Activated naive CD4-positive, alpha-beta T cell treated with anti-CD3 and anti-CD28 coated beads for 36 hours (primary cell): ENCODE measurements at regions of chr21 and their contacts with region 1.

Region 1: GRCh38 chr21:29232601-29233546 is 65.8 kb upstream of the BACH1 start:
- DNase-seq: no peak
- H3K4me3 Mint-ChIP-seq: peak overlapping the region; percentile 13
- H3K27ac Mint-ChIP-seq: peak overlapping the region; percentile 79
- H3K4me1 Mint-ChIP-seq: peaks cover 53% of the 10 kb centered on the region
- H3K27me3 Mint-ChIP-seq: peaks cover 4% of the 10 kb centered on the region

Region 2: DNA sequence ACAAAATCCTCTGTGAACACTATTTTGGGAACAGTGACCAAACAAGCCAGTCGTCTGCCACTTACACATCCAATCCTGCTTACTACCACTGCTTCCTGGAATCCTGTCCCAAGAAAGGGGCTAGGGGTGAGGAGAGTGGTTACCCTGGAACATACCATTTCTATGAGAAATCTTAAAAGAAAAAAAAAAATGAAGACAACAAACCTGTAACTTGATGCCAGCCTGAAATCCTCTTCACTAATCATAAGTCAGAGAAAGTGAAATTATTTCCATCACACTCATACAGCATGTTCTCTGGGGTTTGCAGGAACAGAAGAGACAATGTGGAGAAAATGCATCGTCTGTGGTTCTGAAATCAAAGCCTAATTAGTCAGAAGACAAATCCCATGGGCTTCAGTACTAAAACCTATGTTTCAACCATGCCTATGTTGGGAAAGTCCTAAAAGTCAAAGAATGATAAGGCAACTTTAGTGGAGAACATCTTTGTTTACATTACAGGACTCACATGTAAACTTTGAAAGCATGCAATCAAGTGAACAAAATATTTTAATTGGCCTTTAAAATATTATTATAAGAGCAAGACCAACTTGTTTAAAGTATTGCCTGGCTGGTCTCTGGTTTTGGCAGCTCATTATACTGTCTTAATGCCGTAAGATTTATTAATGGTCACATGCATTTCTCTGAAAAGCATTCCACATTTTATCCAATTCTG is 460.9 kb before region 1 on chr21:
- CTCF ChIA-PET with region 1: no interaction called
- intact Hi-C with region 1: loop called (anchors 5 kb)
- DNase-seq: peak; percentile 23
- H3K4me3 Mint-ChIP-seq: no peak overlapping the region
- H3K27ac Mint-ChIP-seq: no peak overlapping the region
- H3K4me1 Mint-ChIP-seq: peaks cover 52% of the 10 kb centered on the region
- H3K27me3 Mint-ChIP-seq: no peaks in the 10 kb centered on the region

Region 3: GRCh38 chr21:29002442-29003144 is 230.3 kb before region 1 on chr21:
- CTCF ChIA-PET with region 1: no interaction called
- intact Hi-C with region 1: loop called (anchors 1 kb)
- DNase-seq: peak; percentile 96
- H3K4me3 Mint-ChIP-seq: peak overlapping the region; percentile 89
- H3K27ac Mint-ChIP-seq: peak overlapping the region; percentile 95
- H3K4me1 Mint-ChIP-seq: peaks cover 6% of the 10 kb centered on the region
- H3K27me3 Mint-ChIP-seq: no peaks in the 10 kb centered on the region

Region 4: DNA sequence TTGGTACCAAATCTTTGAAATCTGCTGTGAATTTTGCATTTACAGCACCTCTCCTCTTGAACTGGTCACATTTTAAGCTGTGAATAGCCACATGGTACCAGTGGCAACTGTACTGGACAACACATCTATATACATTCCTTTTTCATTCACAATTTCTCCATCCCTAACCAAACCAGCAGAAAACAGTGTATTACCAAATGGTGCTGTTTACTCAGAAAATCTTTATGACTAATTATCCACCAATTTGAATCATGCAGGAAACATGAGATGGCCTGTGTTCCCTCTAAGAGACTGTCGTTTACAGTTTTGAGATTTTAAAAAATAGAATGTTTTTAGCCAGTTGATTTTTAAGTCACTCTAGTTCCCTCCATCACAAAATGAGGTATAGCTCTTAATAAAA is 141.8 kb before region 1 on chr21:
- CTCF ChIA-PET with region 1: no interaction called
- intact Hi-C with region 1: loop called (anchors 2 kb)
- DNase-seq: no peak
- H3K4me3 Mint-ChIP-seq: no peak overlapping the region
- H3K27ac Mint-ChIP-seq: no peak overlapping the region
- H3K4me1 Mint-ChIP-seq: peaks cover 5% of the 10 kb centered on the region
- H3K27me3 Mint-ChIP-seq: no peaks in the 10 kb centered on the region

Region 5: DNA sequence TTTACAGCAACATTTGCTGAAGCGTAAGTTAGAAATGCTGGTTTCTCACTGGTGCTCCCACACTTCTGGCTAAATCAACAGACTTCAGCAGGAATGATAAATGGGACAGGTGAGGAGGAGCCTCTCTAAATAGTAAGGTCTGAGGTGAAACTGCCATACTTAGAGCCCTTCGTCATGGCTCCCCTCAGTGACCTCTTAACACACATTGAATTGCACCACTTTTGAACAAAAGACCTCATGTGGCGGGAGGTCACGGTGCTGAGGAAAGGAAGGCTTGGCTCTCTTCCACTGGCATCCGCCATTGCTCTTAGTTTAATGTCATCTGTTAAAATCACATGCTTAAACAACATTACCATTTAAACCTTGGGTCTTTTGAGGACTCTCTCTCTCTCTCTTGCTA is 99.1 kb before region 1 on chr21:
- CTCF ChIA-PET with region 1: no interaction called
- intact Hi-C with region 1: no loop called
- DNase-seq: no peak
- H3K4me3 Mint-ChIP-seq: no peak overlapping the region
- H3K27ac Mint-ChIP-seq: no peak overlapping the region
- H3K4me1 Mint-ChIP-seq: no peaks in the 10 kb centered on the region
- H3K27me3 Mint-ChIP-seq: no peaks in the 10 kb centered on the region

Region 6: DNA sequence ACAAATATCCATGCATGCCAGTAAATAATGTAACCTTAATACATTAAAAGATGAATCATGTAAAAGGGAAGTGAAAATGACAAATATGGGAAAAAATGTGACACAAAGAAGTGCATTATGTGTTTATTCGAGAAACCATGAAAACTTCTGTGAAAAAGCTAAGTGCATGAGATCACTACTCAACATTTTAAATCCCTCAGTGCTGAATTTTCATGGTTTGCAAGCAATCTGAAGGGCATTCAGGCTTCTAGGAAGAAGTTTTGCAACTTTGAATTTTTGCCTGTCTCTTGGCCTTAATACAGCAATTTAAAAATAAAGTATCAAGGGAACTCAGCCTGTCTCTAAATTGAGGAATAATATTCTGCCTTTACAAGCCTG is 24.2 kb before region 1 on chr21:
- CTCF ChIA-PET with region 1: interaction called, 3 read pairs
- intact Hi-C with region 1: loop called (anchors 1 kb)
- DNase-seq: no peak
- H3K4me3 Mint-ChIP-seq: no peak overlapping the region
- H3K27ac Mint-ChIP-seq: peak overlapping the region; percentile 75
- H3K4me1 Mint-ChIP-seq: peaks cover 30% of the 10 kb centered on the region
- H3K27me3 Mint-ChIP-seq: no peaks in the 10 kb centered on the region

Region 7: DNA sequence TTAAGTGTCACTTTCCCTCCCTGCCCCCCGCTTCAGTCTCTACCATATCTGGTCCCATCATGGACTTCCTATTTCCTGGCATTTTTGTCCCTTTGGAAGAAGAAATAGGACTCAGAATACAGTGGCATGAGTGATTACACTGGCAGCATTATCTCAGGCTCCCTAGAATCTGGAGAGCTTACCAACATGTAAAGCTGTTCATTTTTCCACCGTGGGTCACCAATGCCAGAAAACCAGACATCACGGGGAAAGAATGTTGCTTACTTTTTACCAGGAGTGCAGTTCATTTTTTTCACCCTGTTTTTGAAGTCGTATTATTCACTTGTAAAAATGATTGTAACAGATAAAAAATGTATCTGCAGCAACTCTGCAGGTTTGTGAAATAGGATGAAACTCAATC is 110.6 kb after region 1 on chr21:
- CTCF ChIA-PET with region 1: interaction called, 12 read pairs
- intact Hi-C with region 1: loop called (anchors 1 kb)
- DNase-seq: no peak
- H3K4me3 Mint-ChIP-seq: no peak overlapping the region
- H3K27ac Mint-ChIP-seq: no peak overlapping the region
- H3K4me1 Mint-ChIP-seq: peaks cover 39% of the 10 kb centered on the region
- H3K27me3 Mint-ChIP-seq: no peaks in the 10 kb centered on the region

Region 8: DNA sequence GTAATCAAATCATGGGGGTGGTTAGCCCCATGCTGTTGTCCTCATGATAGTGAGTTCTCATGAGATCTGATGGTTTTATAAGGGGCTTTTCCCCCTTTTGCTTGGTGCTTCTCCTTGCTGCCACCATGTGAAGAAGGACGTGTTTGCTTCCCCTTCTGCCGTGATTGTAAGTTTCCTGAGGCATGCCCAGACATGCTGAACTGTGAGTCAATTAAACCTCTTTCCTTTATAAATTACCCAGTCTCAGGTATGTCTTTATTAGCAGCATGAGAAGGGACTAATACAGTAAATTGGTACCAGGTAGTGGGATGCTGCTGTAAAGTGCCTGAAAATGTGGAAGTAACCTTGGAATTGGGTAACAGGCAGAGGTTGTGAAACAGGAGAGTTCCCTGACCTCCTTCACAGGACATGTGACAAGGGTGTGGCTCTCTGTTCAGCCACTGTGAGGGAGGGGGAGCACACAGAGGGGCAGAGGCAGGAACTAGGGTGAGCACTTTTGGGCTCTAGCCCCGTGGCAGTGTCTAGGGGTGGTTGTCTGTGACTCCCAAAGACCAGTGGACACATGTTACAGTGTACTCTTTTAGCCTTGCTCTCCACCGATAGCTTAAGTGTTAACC is 171.2 kb after region 1 on chr21:
- CTCF ChIA-PET with region 1: no interaction called
- intact Hi-C with region 1: no loop called
- DNase-seq: no peak
- H3K4me3 Mint-ChIP-seq: no peak overlapping the region
- H3K27ac Mint-ChIP-seq: peak overlapping the region; percentile 2
- H3K4me1 Mint-ChIP-seq: no peaks in the 10 kb centered on the region
- H3K27me3 Mint-ChIP-seq: no peaks in the 10 kb centered on the region

Region 9: GRCh38 chr21:29449306-29449950 is 216.6 kb after region 1 on chr21:
- CTCF ChIA-PET with region 1: no interaction called
- intact Hi-C with region 1: loop called (anchors 1 kb)
- DNase-seq: peak; percentile 16
- H3K4me3 Mint-ChIP-seq: peak overlapping the region; percentile 46
- H3K27ac Mint-ChIP-seq: peak overlapping the region; percentile 92
- H3K4me1 Mint-ChIP-seq: peaks cover 17% of the 10 kb centered on the region
- H3K27me3 Mint-ChIP-seq: no peaks in the 10 kb centered on the region

Region 10: DNA sequence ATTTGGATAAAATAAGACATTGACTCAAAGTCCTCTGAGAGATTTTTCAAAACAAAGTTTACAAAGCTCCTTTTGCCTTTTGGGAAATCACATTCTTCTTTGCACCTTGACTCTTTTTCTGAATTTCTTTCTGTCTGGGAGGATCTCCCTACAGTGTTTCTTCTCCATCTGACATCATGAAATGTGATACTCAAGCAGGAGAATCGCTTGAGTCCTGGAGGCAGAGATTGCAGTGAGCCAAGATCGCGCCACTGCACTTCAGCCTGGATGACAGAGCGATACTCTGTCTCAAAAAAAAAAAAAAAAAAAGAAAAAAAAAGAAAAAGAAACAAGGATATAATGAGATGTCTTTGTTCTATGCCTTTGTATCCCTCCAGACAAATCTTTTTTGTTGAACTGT is 720.2 kb after region 1 on chr21:
- CTCF ChIA-PET with region 1: no interaction called
- intact Hi-C with region 1: no loop called
- DNase-seq: no peak
- H3K4me3 Mint-ChIP-seq: no peak overlapping the region
- H3K27ac Mint-ChIP-seq: no peak overlapping the region
- H3K4me1 Mint-ChIP-seq: no peaks in the 10 kb centered on the region
- H3K27me3 Mint-ChIP-seq: peaks cover 9% of the 10 kb centered on the region